Astrocyte of the cerebellum (primary cell): ENCODE measurements at regions of chrX and their contacts with region 1.

Region 1: GRCh38 chrX:8254386-8254785 is 83.3 kb upstream of the VCX2 start:
- DNase-seq: no peak
- H3K4me3 ChIP-seq: no peak overlapping the region
- CTCF ChIP-seq: no peak

Region 2: GRCh38 chrX:8289523-8289922 is 35.1 kb after region 1 on chrX:
- in situ Hi-C with region 1: loop called (anchors 5 kb)
- DNase-seq: no peak
- H3K4me3 ChIP-seq: no peak overlapping the region
- CTCF ChIP-seq: no peak